ENCODE measurements at regions of chr11 and their contacts with region 1.

Region 1: GRCh38 chr11:65569973-65570918 is at the start of gene ZNRD2:
- DNase-seq: peak; percentile 99
- ATAC-seq: peak; percentile 77
- H3K4me3 Mint-ChIP-seq: peak within 1 kb of the TSS; percentile 93
- H3K27ac Mint-ChIP-seq: peak within 1 kb of the TSS; percentile 97
- H3K4me1 Mint-ChIP-seq: peaks cover 57% of the 10 kb centered on the region
- H3K27me3 Mint-ChIP-seq: no peaks in the 10 kb centered on the region
- CTCF ChIP-seq: peak; percentile 27
- total RNA-seq, gene ZNRD2: 54.3 to 54.7 TPM

Region 2: GRCh38 chr11:65459552-65459951 is 110.7 kb before region 1 on chr11:
- CTCF ChIA-PET with region 1: no interaction called
- POLR2A ChIA-PET with region 1: no interaction called
- intact Hi-C with region 1: no loop called
- DNase-seq: no peak
- ATAC-seq: no peak
- H3K4me3 Mint-ChIP-seq: no peak overlapping the region
- H3K27ac Mint-ChIP-seq: no peak overlapping the region
- H3K4me1 Mint-ChIP-seq: peaks cover 22% of the 10 kb centered on the region
- H3K27me3 Mint-ChIP-seq: no peaks in the 10 kb centered on the region
- CTCF ChIP-seq: no peak

Region 3: DNA sequence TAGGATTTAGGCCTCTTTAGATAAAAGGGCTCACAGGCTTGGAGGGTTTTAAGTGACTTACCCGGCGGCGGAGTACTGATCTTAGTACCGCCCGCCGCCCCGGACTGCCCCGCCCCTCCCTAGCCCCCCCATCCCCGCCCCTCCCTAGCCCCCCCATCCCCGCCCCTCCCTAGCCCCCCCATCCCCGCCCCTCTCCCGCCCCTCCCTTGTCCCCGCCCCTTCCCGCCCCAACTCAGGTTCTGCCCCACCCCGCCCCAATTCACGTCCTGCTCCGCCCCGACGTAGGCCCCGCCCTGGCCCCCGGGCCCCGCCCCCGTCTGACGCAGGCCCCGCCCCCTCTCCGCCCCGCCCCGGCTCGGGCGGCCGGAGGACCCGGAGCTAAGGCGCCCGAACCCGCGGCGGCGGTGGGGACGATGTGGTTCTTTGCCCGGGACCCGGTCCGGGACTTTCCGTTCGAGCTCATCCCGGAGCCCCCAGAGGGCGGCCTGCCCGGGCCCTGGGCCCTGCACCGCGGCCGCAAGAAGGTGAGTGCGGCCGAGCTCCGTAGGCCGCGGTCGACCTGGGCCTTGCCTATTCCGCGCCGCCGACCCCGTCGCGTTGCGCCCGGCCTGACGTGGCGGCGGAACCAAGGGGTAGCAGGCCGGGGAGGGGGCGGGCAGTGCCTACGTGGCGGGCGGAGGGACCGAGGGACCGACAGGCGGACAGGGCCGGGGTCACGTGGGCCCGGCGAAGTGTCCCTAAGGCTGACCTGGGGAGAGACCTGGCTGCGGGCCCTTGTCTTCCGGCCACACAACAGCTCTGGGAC is 45.3 kb before region 1 on chr11 and contains the start of gene SCYL1:
- CTCF ChIA-PET with region 1: interaction called, 10 read pairs
- POLR2A ChIA-PET with region 1: no interaction called
- intact Hi-C with region 1: no loop called
- DNase-seq: peak; percentile 79
- ATAC-seq: peak; percentile 93
- H3K4me3 Mint-ChIP-seq: peak within 1 kb of the TSS; percentile 93
- H3K27ac Mint-ChIP-seq: peak within 1 kb of the TSS; percentile 94
- H3K4me1 Mint-ChIP-seq: peaks cover 61% of the 10 kb centered on the region
- H3K27me3 Mint-ChIP-seq: no peaks in the 10 kb centered on the region
- CTCF ChIP-seq: no peak
- total RNA-seq, gene SCYL1: 71.5 to 76.8 TPM

Region 4: GRCh38 chr11:65558002-65558931 is 12.0 kb before region 1 on chr11 and contains the start of gene LTBP3:
- CTCF ChIA-PET with region 1: interaction called, 34 read pairs
- POLR2A ChIA-PET with region 1: interaction called, 18 read pairs
- intact Hi-C with region 1: no loop called
- DNase-seq: peak; percentile 63
- ATAC-seq: peak; percentile 24
- H3K4me3 Mint-ChIP-seq: peak within 1 kb of the TSS; percentile 87
- H3K27ac Mint-ChIP-seq: peak within 1 kb of the TSS; percentile 90
- H3K4me1 Mint-ChIP-seq: peaks cover 60% of the 10 kb centered on the region
- H3K27me3 Mint-ChIP-seq: no peaks in the 10 kb centered on the region
- CTCF ChIP-seq: no peak
- total RNA-seq, gene LTBP3: 55.4 to 56.0 TPM

Region 5: DNA sequence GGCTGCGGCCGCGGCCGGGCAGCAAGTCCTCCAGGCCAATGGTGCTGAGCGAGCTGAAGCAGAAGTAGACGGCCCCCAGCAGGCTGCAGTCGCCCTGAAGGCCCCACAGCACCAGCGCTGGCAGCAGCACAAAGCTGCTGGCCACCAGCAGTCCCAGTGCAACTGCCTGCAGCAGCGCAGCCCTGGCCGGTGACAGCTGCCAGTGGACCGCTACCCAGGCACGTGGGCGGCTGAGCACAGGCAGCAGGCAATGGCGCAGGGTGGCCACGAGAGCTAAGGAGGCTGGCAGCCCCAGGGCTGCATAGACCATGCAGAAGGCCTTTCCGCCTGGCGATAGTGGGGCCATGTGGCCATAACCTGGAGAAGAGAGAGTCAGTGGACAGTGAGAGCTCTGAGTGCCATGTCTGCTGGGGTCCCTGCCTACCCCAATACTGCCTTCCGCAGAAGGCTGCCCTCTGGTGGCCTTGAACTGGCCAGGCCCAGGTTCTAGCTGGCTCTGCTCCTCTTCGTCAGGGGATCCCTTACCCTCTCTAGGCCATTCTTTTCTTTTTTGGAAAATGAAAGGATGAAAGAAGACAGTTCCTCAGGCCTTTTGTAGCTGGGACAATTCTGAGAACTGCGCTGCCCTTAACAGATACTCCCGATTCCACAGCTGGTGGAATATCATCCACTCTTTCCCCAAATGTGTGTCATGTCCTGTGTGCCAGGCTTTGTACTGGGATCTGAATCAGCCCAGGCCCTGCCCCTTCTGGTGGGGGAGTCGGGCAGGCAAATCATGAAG is 23.5 kb after region 1 on chr11:
- CTCF ChIA-PET with region 1: interaction called, 84 read pairs
- POLR2A ChIA-PET with region 1: interaction called, 87 read pairs
- intact Hi-C with region 1: loop called (anchors 2 kb)
- DNase-seq: peak; percentile 73
- ATAC-seq: peak; percentile 24
- H3K4me3 Mint-ChIP-seq: no peak overlapping the region
- H3K27ac Mint-ChIP-seq: no peak overlapping the region
- H3K4me1 Mint-ChIP-seq: peaks cover 29% of the 10 kb centered on the region
- H3K27me3 Mint-ChIP-seq: no peaks in the 10 kb centered on the region
- CTCF ChIP-seq: peak; percentile 80

Measured in activated CD8-positive, alpha-beta T cell treated with anti-CD3 and anti-CD28 coated beads for 36 hours (primary cell).